AG04449 (cell line): ENCODE measurements at regions of chr9 and their contacts with region 1.

Region 1: GRCh38 chr9:115591584-115591984 is 473.6 kb upstream of the TNC start:
- DNase-seq: peak; percentile 99
- H3K4me3 ChIP-seq: no peak overlapping the region
- CTCF ChIP-seq: peak; percentile 74

Region 2: DNA sequence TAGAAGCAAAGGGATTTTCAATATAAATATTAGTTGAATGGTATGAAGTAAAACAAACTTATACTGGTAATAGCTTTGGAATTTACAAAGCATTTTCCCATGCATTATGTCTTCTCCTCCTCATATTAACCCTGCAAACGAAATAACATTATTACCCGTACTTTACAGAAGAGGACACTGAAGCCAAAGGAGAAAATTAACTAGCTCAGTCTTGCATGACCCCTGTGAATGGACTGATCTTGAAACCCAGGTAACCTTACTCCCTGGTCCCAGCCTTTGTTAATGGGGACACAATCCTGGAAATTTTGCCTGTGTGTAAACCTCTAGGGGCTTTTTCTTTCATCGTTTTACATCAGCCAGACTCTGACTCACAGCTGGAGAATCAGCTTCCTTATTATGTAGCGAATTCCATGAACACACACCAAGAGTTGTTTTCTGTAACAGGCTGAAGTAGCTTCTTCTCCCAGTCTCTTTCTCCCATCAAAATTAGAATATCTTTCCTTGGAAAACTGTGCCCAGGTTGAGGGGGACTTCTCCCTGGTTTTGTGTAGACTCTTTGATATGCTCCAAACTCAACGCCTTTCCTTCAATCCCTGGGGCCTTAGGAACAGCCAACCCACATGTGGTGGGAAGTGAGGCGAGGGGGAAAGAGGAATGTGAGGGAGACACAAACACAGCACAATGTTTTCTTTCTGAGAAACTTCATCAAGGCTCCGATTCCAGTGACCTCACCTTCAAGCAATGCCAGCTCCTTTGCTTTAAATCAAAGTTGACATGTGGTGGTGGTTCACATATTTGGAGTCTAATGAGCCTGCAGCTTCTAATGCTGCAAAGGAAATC is 81.1 kb after region 1 on chr9:
- CTCF ChIA-PET with region 1: interaction called, 31 read pairs
- POLR2A ChIA-PET with region 1: interaction called, 33 read pairs
- DNase-seq: peak; percentile 95
- H3K4me3 ChIP-seq: no peak overlapping the region
- CTCF ChIP-seq: no peak

Region 3: DNA sequence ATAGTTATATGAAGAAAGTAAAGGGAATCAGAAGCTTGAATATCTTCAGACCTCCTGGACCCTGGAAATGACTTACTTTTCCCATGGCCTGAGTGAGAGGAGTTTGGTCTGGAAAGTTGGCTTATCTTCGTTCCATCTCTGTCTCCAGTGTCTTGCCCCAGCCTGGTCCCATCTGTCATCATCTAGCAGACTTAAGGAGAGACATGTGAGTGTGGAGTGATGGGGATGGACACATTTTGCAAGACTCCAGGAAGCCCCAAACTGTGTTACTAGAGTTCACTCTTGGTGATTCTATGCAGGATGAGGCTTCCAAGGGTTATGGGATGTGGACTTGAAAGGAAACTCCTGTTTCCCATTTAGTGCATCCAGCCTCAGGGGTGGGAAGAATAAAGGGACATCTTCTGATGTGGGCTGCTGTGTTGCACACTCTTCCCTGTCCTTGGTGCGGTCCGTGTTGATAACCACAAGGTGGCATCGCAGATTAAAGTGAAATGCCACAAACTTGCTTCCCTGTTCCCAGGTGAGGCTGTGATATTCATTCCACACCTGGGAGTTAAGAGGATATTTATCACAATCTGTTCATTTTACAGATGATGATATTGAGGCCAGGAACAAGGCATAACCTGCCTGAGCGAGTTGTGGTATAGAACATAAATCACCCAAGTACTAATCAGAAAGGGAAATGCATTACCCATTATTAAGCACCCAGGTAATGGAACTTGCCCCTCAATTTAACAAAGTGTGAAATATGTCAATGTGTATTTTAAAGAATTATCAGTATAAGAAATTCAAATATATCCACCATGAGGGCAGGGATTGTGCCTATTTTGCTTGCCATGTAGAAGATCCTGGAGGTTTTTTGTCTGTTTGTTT is 292.1 kb after region 1 on chr9:
- CTCF ChIA-PET with region 1: interaction called, 15 read pairs
- POLR2A ChIA-PET with region 1: no interaction called
- DNase-seq: no peak
- H3K4me3 ChIP-seq: no peak overlapping the region
- CTCF ChIP-seq: peak; percentile 67

Region 4: DNA sequence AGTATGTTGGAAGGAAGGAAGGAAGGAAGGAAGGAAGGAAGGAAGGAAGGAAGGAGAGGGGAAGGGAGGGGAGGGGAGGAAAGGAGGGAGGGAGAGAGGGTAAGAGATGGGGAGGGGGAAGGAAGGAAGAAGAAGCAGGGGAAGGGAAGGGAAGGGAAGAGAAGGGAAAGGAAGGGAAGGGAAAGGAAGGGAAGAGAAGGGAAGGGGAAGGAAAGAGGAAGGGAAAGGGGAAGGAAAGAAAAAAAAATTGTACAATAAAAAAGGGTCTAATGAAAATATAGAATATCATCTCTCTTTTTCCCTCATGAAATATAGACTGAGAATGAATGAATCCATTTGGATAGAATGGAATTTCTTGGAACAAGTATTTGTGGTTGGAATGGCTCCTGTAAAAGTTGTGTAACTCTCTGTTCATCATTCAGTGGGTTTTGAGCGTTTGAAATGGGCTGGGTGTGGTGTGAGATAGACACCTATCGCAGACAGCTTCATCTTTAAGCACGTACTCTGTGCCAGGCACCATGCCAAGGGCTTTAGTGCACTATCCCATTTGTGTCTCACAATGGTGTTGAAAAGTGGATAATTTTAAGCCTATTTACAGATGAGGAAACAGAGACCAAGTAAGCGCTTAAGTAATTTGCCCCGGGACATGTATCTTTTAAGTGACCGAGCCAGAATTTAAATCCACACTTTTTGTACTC is 550.4 kb after region 1 on chr9:
- CTCF ChIA-PET with region 1: no interaction called
- POLR2A ChIA-PET with region 1: no interaction called
- DNase-seq: no peak
- H3K4me3 ChIP-seq: no peak overlapping the region
- CTCF ChIP-seq: no peak

Region 5: DNA sequence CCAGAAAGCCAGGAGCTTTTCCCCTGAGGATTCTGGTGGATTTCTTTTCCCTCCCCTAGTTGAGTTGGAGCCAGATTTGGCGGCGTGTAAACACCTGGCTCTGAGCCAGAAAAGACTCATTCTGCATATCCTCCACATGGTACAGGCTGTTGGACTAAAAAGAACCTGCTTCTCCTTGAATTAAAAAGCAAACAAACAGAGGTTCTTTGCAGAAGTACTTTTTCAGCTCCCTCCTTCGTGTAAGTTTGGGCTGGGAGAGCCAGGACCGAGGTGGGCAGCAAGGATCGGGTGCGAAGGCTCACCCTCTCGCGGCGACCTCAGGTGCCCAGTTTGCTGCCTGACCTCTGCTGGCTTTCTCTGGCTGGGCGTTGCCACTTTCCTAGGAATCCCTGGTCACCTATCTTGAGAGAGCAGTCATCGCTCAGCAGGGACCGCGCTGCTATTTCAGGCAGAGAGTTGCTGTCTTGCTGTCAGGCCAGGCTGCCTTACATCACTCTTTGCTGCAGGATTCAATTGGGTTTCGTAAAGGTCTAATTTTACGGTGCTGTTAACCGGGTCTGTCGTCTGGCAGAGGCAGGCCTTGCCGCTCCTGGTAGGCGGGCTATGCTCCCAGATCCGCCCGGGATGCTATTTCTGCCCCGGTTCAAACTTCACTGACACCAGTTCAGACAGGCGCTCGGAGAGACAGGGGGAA is 565.2 kb after region 1 on chr9:
- CTCF ChIA-PET with region 1: interaction called, 63 read pairs
- POLR2A ChIA-PET with region 1: interaction called, 4 read pairs
- DNase-seq: no peak
- H3K4me3 ChIP-seq: peak overlapping the region; percentile 87
- CTCF ChIP-seq: no peak

Region 6: DNA sequence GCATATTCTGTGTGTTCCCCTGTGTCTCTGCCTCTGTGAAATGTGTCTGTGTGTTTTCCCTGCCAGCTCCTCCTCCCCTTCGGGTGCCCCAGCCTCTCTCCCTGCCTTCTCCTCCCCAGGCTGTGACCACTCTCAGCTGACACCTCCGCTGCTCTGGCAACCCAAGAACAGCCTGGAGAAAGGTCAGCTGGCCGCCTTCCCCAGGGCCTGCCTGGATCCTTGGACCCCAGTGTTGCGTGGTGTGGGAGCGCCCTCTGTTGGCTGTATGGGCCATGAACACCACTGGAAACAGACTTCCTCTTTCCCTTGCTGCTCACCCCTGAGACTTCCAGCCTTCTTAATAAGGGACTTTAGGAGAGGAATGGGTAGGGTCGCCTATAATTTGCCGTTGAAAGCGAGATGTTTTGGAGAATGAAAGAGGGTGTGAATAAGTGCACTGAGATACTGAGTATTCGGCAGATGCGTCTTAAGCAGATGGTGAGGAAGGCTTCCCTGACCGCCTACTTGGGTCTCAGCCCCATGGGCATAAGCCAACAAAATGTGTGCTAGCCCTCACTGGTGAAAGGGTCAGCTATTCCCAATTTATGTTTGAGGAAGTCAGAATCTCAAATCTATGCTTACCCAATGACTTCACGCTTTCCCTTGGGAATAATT is 980.6 kb after region 1 on chr9:
- CTCF ChIA-PET with region 1: interaction called, 107 read pairs
- POLR2A ChIA-PET with region 1: no interaction called
- DNase-seq: no peak
- H3K4me3 ChIP-seq: no peak overlapping the region
- CTCF ChIP-seq: peak; percentile 98

Region 7: DNA sequence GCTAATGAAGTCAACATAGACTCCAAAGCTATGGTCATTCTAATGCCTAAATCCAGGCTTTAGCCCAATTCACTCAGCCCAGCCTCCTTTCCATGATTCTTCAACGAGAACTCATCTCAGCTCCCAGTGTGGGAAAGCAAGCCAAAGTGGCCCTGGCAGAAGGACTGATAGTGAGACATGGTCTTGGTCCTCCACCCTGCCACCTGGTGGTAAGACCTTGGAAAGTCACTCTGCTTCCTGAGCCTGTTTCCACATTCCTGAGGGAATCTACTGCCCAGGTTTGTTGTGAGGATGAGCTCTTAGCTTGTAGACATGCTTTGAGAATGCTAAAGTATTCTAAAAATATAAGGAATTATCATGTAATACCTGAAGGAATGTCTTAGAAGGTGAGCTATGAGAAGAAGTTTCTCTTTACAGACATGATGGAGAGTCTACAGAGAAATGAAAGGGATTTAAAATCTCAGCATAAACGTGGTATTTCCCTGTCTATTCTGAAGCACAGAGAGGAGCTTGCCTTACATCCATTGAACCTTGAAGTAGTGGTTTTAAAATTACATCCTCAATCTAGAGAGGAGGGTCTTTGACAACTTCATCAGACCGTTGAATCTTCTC is 1269.0 kb after region 1 on chr9:
- CTCF ChIA-PET with region 1: interaction called, 57 read pairs
- POLR2A ChIA-PET with region 1: no interaction called
- DNase-seq: peak; percentile 2
- H3K4me3 ChIP-seq: no peak overlapping the region
- CTCF ChIP-seq: peak; percentile 83